ENCODE measurements at regions of chr20 and their contacts with region 1.

Region 1: DNA sequence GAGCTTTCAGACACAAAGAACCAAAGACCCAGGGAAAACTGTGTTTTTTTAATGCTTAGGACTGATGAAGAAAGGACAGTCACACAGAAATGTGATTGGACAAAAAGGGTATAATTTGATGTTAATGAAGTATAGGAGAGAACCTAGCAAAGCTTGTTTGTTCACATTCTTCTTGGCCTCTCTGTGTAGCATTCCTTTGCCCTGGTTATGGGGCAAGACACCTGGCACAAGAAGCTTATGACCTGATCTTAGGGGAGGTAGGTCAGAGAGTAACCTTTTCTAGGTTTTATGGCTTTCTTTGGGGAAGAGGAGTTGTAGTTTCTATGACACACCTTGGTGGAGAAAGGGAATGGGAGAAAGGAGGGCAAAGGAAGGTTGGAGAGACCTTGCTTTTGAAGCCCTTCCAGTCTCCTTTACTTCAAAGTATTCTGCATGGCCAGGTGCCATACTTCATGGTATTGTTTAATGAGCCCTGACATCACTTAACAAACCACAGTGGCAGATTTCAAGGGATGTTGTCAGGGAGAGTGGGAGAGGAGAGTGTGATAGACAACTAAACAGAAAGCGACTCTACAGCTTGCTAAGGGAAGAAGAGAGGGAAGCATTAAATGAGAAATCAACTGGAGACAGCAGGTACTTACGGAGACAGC is 701.8 kb upstream of the FLRT3 start:
- DNase-seq: no peak
- ATAC-seq: no peak
- H3K4me3 ChIP-seq: no peak overlapping the region
- H3K27ac ChIP-seq: no peak overlapping the region
- H3K4me1 ChIP-seq: no peaks in the 10 kb centered on the region
- H3K27me3 ChIP-seq: no peaks in the 10 kb centered on the region
- CTCF ChIP-seq: no peak
- POLR2A ChIP-seq: no peak

Region 2: GRCh38 chr20:15091421-15092037 is 52.3 kb after region 1 on chr20:
- intact Hi-C with region 1: loop called in 1 of 10 experiments (anchors 10 kb)
- DNase-seq: no peak
- ATAC-seq: no peak
- H3K4me3 ChIP-seq: no peak overlapping the region
- H3K27ac ChIP-seq: no peak overlapping the region
- H3K4me1 ChIP-seq: no peaks in the 10 kb centered on the region
- H3K27me3 ChIP-seq: no peaks in the 10 kb centered on the region
- CTCF ChIP-seq: no peak
- POLR2A ChIP-seq: no peak

Region 3: GRCh38 chr20:15288106-15288505 is 248.9 kb after region 1 on chr20:
- intact Hi-C with region 1: no loop called
- DNase-seq: no peak
- ATAC-seq: no peak
- H3K4me3 ChIP-seq: no peak overlapping the region
- H3K27ac ChIP-seq: no peak overlapping the region
- H3K4me1 ChIP-seq: no peaks in the 10 kb centered on the region
- H3K27me3 ChIP-seq: no peaks in the 10 kb centered on the region
- CTCF ChIP-seq: no peak
- POLR2A ChIP-seq: no peak